B cell (primary cell): ENCODE measurements at regions of chr11 and their contacts with region 1.

Region 1: GRCh38 chr11:64887757-64888405 is 9.5 kb upstream of the EHD1 start:
- DNase-seq: peak; percentile 90
- ATAC-seq: peak; percentile 97
- H3K4me3 ChIP-seq: peak overlapping the region in 4 of 5 experiments; percentile 14 to 50 (median 42)
- H3K4me3 Mint-ChIP-seq: peak overlapping the region; percentile 84
- H3K27ac ChIP-seq: peak overlapping the region; percentile 43 to 56
- H3K27ac Mint-ChIP-seq: peak overlapping the region; percentile 88
- H3K4me1 ChIP-seq: peaks cover 25 to 33% of the 10 kb centered on the region in 2 donors
- H3K4me1 Mint-ChIP-seq: peaks cover 34% of the 10 kb centered on the region
- H3K27me3 ChIP-seq: no peaks in the 10 kb centered on the region
- H3K27me3 Mint-ChIP-seq: no peaks in the 10 kb centered on the region
- CTCF ChIP-seq: peak; percentile 91

Region 2: GRCh38 chr11:63855975-63856749 is 1031.7 kb before region 1 on chr11:
- CTCF ChIA-PET with region 1: no interaction called
- POLR2A ChIA-PET with region 1: interaction called, 10 read pairs
- intact Hi-C with region 1: no loop called
- DNase-seq: no peak
- ATAC-seq: no peak
- H3K4me3 ChIP-seq: no peak overlapping the region
- H3K4me3 Mint-ChIP-seq: no peak overlapping the region
- H3K27ac ChIP-seq: peak overlapping the region in 1 of 2 donors; percentile 34
- H3K27ac Mint-ChIP-seq: no peak overlapping the region
- H3K4me1 ChIP-seq: peaks cover 8 to 10% of the 10 kb centered on the region in 2 donors
- H3K4me1 Mint-ChIP-seq: peaks cover 16% of the 10 kb centered on the region
- H3K27me3 ChIP-seq: no peaks in the 10 kb centered on the region
- H3K27me3 Mint-ChIP-seq: no peaks in the 10 kb centered on the region
- CTCF ChIP-seq: no peak

Region 3: GRCh38 chr11:64810271-64810890 is 77.5 kb before region 1 on chr11 and contains the start of gene MEN1:
- CTCF ChIA-PET with region 1: no interaction called
- POLR2A ChIA-PET with region 1: no interaction called
- intact Hi-C with region 1: loop called (anchors 2 kb)
- DNase-seq: peak; percentile 82
- ATAC-seq: peak; percentile 84
- H3K4me3 ChIP-seq: peak within 1 kb of the TSS; percentile 36 to 99 (median 86)
- H3K4me3 Mint-ChIP-seq: peak within 1 kb of the TSS; percentile 98
- H3K27ac ChIP-seq: peak within 1 kb of the TSS; percentile 63 to 79
- H3K27ac Mint-ChIP-seq: peak within 1 kb of the TSS; percentile 95
- H3K4me1 ChIP-seq: peaks cover 15 to 32% of the 10 kb centered on the region in 2 donors
- H3K4me1 Mint-ChIP-seq: peaks cover 34% of the 10 kb centered on the region
- H3K27me3 ChIP-seq: no peaks in the 10 kb centered on the region
- H3K27me3 Mint-ChIP-seq: no peaks in the 10 kb centered on the region
- CTCF ChIP-seq: no peak
- total RNA-seq, gene MEN1: 46.3 and 48.2 TPM in 2 replicates